Left cardiac atrium (tissue), 4 donors: ENCODE measurements at regions of chr1 and their contacts with region 1.

Region 1: GRCh38 chr1:77200806-77201205 is 18.4 kb downstream of the PIGK start:
- DNase-seq: no peak
- ATAC-seq: no peak

Region 2: DNA sequence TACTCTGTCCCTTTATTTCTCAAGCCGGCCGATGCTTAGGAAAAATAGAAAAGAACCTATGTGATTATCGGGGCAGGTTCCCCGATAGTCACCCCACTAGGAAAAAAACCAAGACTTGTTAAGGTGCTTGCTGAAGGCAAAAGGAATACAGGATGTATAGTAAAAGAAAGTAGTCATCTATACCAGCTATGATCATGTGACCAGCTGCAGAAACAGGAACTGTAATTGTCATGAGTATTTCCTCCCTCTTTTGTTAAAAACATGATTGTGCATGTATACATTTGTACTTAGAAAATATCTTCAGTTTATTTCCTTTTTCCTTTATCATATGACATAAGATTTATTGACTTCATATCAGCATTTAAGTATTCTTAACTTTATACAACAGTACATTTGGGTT is 12.0 kb before region 1 on chr1:
- intact Hi-C with region 1: loop called in 1 of 2 experiments (anchors 2 kb)
- DNase-seq: no peak
- ATAC-seq: no peak

Region 3: DNA sequence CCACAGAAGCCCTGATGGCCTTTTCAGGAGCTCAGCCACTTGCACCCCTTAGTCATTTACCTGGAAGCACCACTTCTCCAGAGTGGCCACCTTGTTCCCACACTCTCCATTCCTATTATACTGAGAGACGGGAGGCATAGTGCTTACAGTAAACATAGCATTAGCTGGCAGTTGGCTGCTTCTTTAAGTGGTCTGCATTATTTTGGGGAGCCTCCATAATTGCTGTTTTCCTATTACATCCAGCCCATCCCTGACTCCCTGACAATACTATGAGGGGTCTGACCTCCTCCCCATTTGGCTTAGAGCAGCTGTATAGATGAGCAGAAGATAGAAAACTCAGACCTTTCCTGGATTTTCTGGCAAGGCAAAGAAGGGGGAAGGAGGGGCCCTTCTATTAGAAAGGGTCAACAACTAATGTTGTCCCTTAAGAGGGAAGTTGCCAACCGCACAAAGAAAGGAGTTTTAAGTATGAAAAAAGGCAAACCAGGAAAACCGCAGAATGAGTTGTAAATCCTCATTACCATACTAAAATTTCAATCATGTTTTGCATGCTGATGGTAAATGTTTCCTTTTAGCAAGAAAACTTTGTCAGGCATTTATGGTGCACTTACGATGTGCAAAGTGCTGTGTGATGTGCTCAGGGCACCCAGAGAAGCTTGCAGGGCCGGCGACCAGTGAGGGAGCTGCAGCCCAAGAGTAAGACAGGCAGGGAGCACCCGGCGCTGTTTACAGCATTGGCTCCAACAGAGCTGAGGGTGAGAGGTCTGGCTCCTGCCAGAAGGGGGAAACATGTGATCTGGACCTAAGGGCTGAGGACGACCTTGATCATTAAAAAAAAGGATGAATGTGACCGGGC is 314.3 kb after region 1 on chr1:
- intact Hi-C with region 1: no loop called
- DNase-seq: no peak
- ATAC-seq: peak; percentile 81 to 86